PC-9 (cell line): ENCODE measurements at regions of chr20 and their contacts with region 1.

Region 1: DNA sequence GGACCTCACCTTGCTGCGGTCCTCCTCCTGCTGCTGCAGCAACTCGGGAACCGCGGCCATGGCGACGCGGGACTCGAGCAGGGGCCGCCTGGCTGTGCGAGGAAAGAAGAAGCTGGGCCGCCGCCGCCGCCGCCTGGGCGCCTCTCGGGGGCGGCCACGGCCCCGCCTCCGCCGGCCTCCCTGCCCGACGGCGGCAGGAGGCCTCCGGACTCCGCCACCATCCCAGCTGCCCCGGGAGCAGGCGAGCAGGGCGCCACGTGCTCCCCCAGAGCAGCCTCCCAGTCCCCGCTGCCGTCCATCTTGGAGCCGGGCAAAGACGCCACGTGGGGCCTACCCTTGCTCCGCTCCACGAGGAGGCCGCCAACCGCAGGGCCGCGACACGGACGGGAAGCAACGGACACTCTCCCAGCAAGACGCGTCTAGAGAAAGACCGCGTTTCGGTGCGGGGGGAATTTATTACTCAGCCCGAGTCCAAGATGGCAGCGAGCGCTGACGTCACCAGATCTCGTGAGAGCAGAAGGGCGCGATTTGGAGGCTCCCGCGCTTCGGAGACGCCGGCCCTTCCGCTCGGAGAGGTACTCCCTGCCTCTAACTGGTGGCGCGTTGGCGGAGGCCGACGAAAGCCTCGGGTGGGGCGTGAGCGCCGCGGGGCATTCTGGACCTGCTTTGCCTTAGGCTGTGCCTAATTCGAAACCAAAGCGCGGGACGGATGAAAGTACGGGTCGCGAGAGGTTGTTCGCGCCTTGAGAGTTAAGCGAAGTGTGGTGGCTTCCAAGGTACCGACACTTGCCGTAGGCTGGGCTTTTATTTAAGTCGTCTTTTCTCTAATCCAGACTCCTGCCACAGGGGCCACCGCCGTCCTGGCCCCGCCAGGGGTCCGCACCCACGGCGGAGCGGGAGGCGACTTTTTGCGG is at the starts of genes MGME1 and SNX5:
- DNase-seq: peak; percentile 95 to 100
- H3K4me3 ChIP-seq: peak within 1 kb of the TSS; percentile 96
- H3K27ac ChIP-seq: peak within 1 kb of the TSS; percentile 95
- H3K4me1 ChIP-seq: peaks cover 70% of the 10 kb centered on the region
- H3K27me3 ChIP-seq: no peaks in the 10 kb centered on the region
- CTCF ChIP-seq: no peak
- total RNA-seq, gene MGME1: 31.3 and 42.8 TPM in 2 replicates
- total RNA-seq, gene SNX5: 97.7 and 116 TPM in 2 replicates

Region 2: GRCh38 chr20:17682103-17682888 is 286.3 kb before region 1 on chr20 and contains the start of gene RRBP1:
- CTCF ChIA-PET with region 1: no interaction called
- POLR2A ChIA-PET with region 1: no interaction called
- intact Hi-C with region 1: loop called (anchors 1 kb)
- DNase-seq: peak; percentile 85 to 99
- H3K4me3 ChIP-seq: peak within 1 kb of the TSS; percentile 66
- H3K27ac ChIP-seq: peak within 1 kb of the TSS; percentile 37; the same call in 1 of the 2 replicates
- H3K4me1 ChIP-seq: peaks cover 24% of the 10 kb centered on the region
- H3K27me3 ChIP-seq: peaks cover 41% of the 10 kb centered on the region
- CTCF ChIP-seq: peak; percentile 86
- total RNA-seq, gene RRBP1: 144 and 156 TPM in 2 replicates

Region 3: GRCh38 chr20:17699931-17700657 is 268.5 kb before region 1 on chr20 and contains the start of gene BANF2:
- CTCF ChIA-PET with region 1: no interaction called
- POLR2A ChIA-PET with region 1: no interaction called
- intact Hi-C with region 1: no loop called
- DNase-seq: no peak
- H3K4me3 ChIP-seq: no peak within 1 kb of the TSS
- H3K27ac ChIP-seq: no peak within 1 kb of the TSS
- H3K4me1 ChIP-seq: no peaks in the 10 kb centered on the region
- H3K27me3 ChIP-seq: no peaks in the 10 kb centered on the region
- CTCF ChIP-seq: no peak
- total RNA-seq, gene BANF2: not detected in 2 replicates

Region 4: DNA sequence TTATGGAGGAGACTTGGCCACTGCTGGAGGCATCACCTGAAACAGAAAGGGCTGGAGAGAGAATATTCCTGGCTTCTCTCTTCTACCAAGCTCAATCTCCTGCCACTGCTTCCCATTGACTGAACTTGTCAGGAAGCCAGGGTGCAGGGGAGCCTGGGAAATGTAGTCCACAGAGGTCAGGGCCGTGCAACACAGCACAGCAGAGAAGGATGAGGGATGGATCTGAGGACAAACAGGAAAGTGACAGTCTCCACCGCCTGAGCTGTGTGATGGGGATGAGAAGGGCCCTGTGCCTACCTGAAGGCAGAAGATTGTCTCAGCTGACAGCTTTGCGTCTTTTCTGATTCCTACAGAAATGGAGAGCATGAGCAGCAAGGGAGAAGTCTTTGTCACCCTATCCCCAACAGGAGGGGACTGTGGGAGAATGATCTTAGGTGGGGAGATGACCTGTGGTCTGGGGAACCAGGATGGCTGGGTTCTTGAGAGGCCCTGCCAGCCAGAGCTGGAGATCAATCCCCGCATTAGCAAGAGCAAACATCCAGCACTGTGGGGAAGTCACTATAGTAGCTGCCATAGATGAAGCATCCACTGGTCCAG is 114.2 kb before region 1 on chr20:
- CTCF ChIA-PET with region 1: no interaction called
- POLR2A ChIA-PET with region 1: no interaction called
- intact Hi-C with region 1: no loop called
- DNase-seq: peak in 1 of 2 experiments; percentile 25
- H3K4me3 ChIP-seq: no peak overlapping the region
- H3K27ac ChIP-seq: no peak overlapping the region
- H3K4me1 ChIP-seq: peaks cover 14% of the 10 kb centered on the region; the same call in 1 of the 2 replicates
- H3K27me3 ChIP-seq: no peaks in the 10 kb centered on the region
- CTCF ChIP-seq: no peak

Region 5: GRCh38 chr20:18056174-18057100 is 87.8 kb after region 1 on chr20:
- CTCF ChIA-PET with region 1: no interaction called
- POLR2A ChIA-PET with region 1: no interaction called
- intact Hi-C with region 1: loop called (anchors 1 kb)
- DNase-seq: peak in 1 of 2 experiments; percentile 70
- H3K4me3 ChIP-seq: peak overlapping the region; percentile 95
- H3K27ac ChIP-seq: no peak overlapping the region
- H3K4me1 ChIP-seq: peaks cover 52% of the 10 kb centered on the region
- H3K27me3 ChIP-seq: no peaks in the 10 kb centered on the region
- CTCF ChIP-seq: no peak

Region 6: GRCh38 chr20:18287915-18288748 is 319.5 kb after region 1 on chr20 and contains the start of gene ZNF133:
- CTCF ChIA-PET with region 1: no interaction called
- POLR2A ChIA-PET with region 1: interaction called, 7 read pairs
- intact Hi-C with region 1: loop called (anchors 1 kb)
- DNase-seq: peak; percentile 93 to 98
- H3K4me3 ChIP-seq: peak within 1 kb of the TSS; percentile 87
- H3K27ac ChIP-seq: peak within 1 kb of the TSS; percentile 92
- H3K4me1 ChIP-seq: peaks cover 18% of the 10 kb centered on the region
- H3K27me3 ChIP-seq: no peaks in the 10 kb centered on the region
- CTCF ChIP-seq: no peak
- total RNA-seq, gene ZNF133: 16.3 and 22.8 TPM in 2 replicates

Region 7: GRCh38 chr20:18466894-18467730 is 498.5 kb after region 1 on chr20 and contains the starts of genes DZANK1 and POLR3F:
- CTCF ChIA-PET with region 1: no interaction called
- POLR2A ChIA-PET with region 1: no interaction called
- intact Hi-C with region 1: loop called (anchors 2 kb)
- DNase-seq: peak; percentile 86 to 96
- H3K4me3 ChIP-seq: peak within 1 kb of the TSS; percentile 97
- H3K27ac ChIP-seq: peak within 1 kb of the TSS; percentile 52
- H3K4me1 ChIP-seq: peaks cover 16% of the 10 kb centered on the region
- H3K27me3 ChIP-seq: no peaks in the 10 kb centered on the region
- CTCF ChIP-seq: no peak
- total RNA-seq, gene DZANK1: 4.4 and 7.3 TPM in 2 replicates
- total RNA-seq, gene POLR3F: 7.4 and 9.6 TPM in 2 replicates

Region 8: GRCh38 chr20:19249106-19249879 is 1280.7 kb after region 1 on chr20:
- CTCF ChIA-PET with region 1: no interaction called
- POLR2A ChIA-PET with region 1: no interaction called
- intact Hi-C with region 1: no loop called
- DNase-seq: no peak
- H3K4me3 ChIP-seq: no peak overlapping the region
- H3K27ac ChIP-seq: no peak overlapping the region
- H3K4me1 ChIP-seq: no peaks in the 10 kb centered on the region
- H3K27me3 ChIP-seq: peaks cover 27% of the 10 kb centered on the region
- CTCF ChIP-seq: no peak